H1 (cell line): ENCODE measurements at regions of chr7 and their contacts with region 1.

Region 1: GRCh38 chr7:6516387-6516983 is 34.8 kb downstream of the GRID2IP start:
- DNase-seq: peak; percentile 57 to 81
- H3K4me3 ChIP-seq: peak overlapping the region in 2 of 4 experiments; percentile 17 to 45; a peak in 4 of 8 replicates
- H3K27ac ChIP-seq: no peak overlapping the region
- H3K4me1 ChIP-seq: no peaks in the 10 kb centered on the region
- H3K27me3 ChIP-seq: no peaks in the 10 kb centered on the region
- CTCF ChIP-seq: peak; percentile 78 to 91 (median 88)
- EP300 ChIP-seq: no peak
- POLR2A ChIP-seq: no peak
- RAD21 ChIP-seq: peak; percentile 89

Region 2: GRCh38 chr7:6482743-6483119 is 33.8 kb before region 1 on chr7:
- CTCF ChIA-PET with region 1: no interaction called
- POLR2A ChIA-PET with region 1: no interaction called
- DNase-seq: no peak
- H3K4me3 ChIP-seq: peak overlapping the region; percentile 70 to 100 (median 82)
- H3K27ac ChIP-seq: no peak overlapping the region
- H3K4me1 ChIP-seq: peaks cover 0 to 3% (median 0%) of the 10 kb centered on the region in 4 experiments; a peak in 1 of 7 replicates
- H3K27me3 ChIP-seq: peaks cover 0 to 3% (median 0%) of the 10 kb centered on the region in 4 experiments; a peak in 1 of 7 replicates
- CTCF ChIP-seq: no peak
- EP300 ChIP-seq: no peak
- POLR2A ChIP-seq: no peak
- RAD21 ChIP-seq: no peak

Region 3: GRCh38 chr7:6530626-6531491 is 14.4 kb after region 1 on chr7:
- CTCF ChIA-PET with region 1: interaction called, 18 read pairs
- POLR2A ChIA-PET with region 1: interaction called, 6 read pairs
- DNase-seq: peak in 1 of 2 experiments; percentile 91
- H3K4me3 ChIP-seq: peak overlapping the region; percentile 57 to 83 (median 74)
- H3K27ac ChIP-seq: no peak overlapping the region
- H3K4me1 ChIP-seq: peaks cover 0 to 14% (median 10%) of the 10 kb centered on the region in 4 experiments; a peak in 4 of 7 replicates
- H3K27me3 ChIP-seq: peaks cover 7 to 72% (median 58%) of the 10 kb centered on the region in 4 experiments
- CTCF ChIP-seq: no peak
- EP300 ChIP-seq: no peak
- POLR2A ChIP-seq: no peak
- RAD21 ChIP-seq: no peak

Region 4: GRCh38 chr7:6536262-6537260 is 20.1 kb after region 1 on chr7:
- CTCF ChIA-PET with region 1: interaction called, 18 read pairs
- POLR2A ChIA-PET with region 1: interaction called, 6 read pairs
- DNase-seq: peak; percentile 41 to 81
- H3K4me3 ChIP-seq: peak overlapping the region; percentile 58 to 75 (median 67)
- H3K27ac ChIP-seq: no peak overlapping the region
- H3K4me1 ChIP-seq: peaks cover 0 to 3% (median 2%) of the 10 kb centered on the region in 4 experiments; a peak in 4 of 7 replicates
- H3K27me3 ChIP-seq: peaks cover 3 to 36% (median 32%) of the 10 kb centered on the region in 4 experiments
- CTCF ChIP-seq: no peak
- EP300 ChIP-seq: no peak
- POLR2A ChIP-seq: no peak
- RAD21 ChIP-seq: no peak

Region 5: DNA sequence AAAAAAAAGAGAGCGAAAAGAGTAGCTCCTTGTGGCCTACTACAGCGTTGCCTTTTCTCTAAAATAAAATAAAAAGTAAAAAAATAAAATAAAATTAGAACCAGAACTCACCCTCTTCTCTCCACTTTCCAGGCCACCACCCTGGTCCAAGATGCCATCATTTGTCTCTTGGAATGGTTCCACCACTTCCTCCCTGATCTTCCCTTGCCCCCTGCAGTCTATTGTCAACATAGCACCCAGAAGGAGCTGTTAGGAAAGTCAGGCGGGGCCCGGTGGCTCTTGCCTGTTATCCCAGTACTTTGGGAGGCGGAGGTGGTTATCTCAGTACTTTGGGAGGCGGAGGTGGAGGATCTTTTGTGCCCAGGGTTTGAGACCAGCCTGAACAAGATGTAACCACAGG is 42.4 kb after region 1 on chr7:
- CTCF ChIA-PET with region 1: interaction called, 12 read pairs
- POLR2A ChIA-PET with region 1: interaction called, 3 read pairs
- DNase-seq: no peak
- H3K4me3 ChIP-seq: no peak overlapping the region
- H3K27ac ChIP-seq: no peak overlapping the region
- H3K4me1 ChIP-seq: peaks cover 0 to 3% (median 1%) of the 10 kb centered on the region in 4 experiments; a peak in 3 of 7 replicates
- H3K27me3 ChIP-seq: no peaks in the 10 kb centered on the region
- CTCF ChIP-seq: peak; percentile 24 to 58 (median 56)
- EP300 ChIP-seq: no peak
- POLR2A ChIP-seq: no peak
- RAD21 ChIP-seq: peak; percentile 39 to 63; a peak in 3 of 4 replicates

Region 6: DNA sequence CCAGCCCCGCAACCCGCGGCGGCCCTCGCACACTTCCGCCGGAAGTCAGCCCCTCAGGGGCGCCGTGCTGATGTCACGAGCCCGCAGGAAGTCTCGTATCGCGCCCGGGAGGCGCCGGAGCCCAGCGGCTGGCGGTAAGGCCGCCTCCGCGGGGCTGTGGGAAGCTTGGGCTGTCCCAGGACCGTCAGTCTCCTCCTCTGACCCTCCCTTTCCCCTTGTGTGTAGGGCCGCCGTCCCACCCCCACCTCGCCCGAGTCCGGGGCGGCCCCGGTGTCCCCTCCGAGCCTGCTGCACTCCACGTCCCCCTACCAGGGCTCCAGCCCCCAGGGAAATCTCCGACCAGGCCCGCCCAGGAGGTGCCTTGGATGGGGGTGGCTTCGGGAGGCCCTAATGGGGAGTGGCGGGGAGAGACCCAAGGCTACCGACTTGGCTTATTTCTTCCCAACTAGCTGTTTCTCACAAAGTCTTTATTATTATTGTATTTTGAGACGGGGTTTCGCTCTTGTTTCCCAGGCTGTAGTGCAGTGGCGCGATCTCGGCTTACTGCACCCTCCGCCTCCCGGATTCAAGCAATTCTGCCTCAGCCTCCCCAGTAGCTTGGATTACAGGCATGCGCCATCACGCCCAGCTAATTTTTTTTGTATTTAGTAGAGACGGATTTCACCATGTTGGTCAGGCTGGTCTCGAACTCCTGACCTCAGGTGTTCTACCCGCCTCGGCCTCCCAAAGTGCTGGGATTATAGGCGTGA is 61.1 kb after region 1 on chr7 and contains the start of gene ZDHHC4:
- CTCF ChIA-PET with region 1: interaction called, 63 read pairs
- POLR2A ChIA-PET with region 1: interaction called, 4 read pairs
- DNase-seq: peak; percentile 58 to 82
- H3K4me3 ChIP-seq: peak within 1 kb of the TSS; percentile 59 to 79 (median 72)
- H3K27ac ChIP-seq: peak within 1 kb of the TSS; percentile 85; the same call in 1 of the 2 replicates
- H3K4me1 ChIP-seq: no peaks in the 10 kb centered on the region
- H3K27me3 ChIP-seq: no peaks in the 10 kb centered on the region
- CTCF ChIP-seq: no peak
- EP300 ChIP-seq: no peak; a peak in 1 of 3 replicates
- POLR2A ChIP-seq: peak; percentile 79 to 95
- RAD21 ChIP-seq: no peak
- total RNA-seq, gene ZDHHC4: 50.2 and 50.8 TPM in 2 replicates

Region 7: DNA sequence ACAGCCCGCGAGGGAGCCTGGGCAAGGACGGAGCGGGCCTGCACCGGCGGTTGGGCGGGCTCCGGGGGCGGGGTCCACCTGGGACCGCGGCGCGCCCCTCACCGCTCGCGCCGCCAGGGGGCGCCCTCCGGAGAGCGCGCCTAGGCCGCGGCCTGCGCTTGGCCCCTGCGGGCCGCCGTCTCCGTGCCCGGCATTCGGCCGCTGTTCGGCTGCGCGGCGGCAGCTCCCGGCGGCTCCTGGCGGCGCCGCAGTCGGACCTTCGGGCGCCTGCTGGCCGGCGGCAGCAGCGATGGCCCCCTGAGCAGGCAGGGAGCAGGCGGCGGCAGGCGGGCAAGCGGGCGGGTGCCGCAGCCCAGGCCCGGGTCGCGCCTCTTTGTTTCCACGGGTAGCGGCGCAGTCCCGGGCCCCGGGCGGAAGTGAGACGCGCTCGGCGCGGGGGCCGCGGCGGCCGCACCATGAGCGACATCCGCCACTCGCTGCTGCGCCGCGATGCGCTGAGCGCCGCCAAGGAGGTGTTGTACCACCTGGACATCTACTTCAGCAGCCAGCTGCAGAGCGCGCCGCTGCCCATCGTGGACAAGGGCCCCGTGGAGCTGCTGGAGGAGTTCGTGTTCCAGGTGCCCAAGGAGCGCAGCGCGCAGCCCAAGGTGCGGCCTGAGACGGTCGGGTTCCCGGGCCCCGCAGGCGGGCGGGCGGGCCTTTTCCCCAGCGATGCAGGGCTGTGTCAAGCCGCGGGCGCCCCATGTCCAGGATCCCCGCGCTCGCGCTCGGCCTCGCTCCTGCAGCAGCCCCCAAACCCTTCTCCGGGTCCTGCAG is 73.6 kb after region 1 on chr7 and contains the start of gene INTS15:
- CTCF ChIA-PET with region 1: interaction called, 16 read pairs
- POLR2A ChIA-PET with region 1: interaction called, 3 read pairs
- DNase-seq: peak in 1 of 2 experiments; percentile 87
- H3K4me3 ChIP-seq: peak within 1 kb of the TSS; percentile 77 to 86 (median 80)
- H3K27ac ChIP-seq: no peak within 1 kb of the TSS
- H3K4me1 ChIP-seq: peaks cover 0 to 3% (median 0%) of the 10 kb centered on the region in 4 experiments; a peak in 1 of 7 replicates
- H3K27me3 ChIP-seq: no peaks in the 10 kb centered on the region
- CTCF ChIP-seq: peak; percentile 81 to 95 (median 84)
- EP300 ChIP-seq: no peak
- POLR2A ChIP-seq: peak; percentile 83 to 90
- RAD21 ChIP-seq: peak in 1 of 2 experiments; percentile 56; a peak in 2 of 4 replicates
- total RNA-seq, gene INTS15: 25.7 and 26.1 TPM in 2 replicates